Endothelial cell of umbilical vein (primary cell): ENCODE measurements at regions of chr17 and their contacts with region 1.

Region 1: GRCh38 chr17:19766422-19767270 is 18.5 kb upstream of the ALDH3A1 start:
- DNase-seq: peak; percentile 69
- H3K4me3 ChIP-seq: no peak overlapping the region
- H3K27ac ChIP-seq: no peak overlapping the region
- H3K4me1 ChIP-seq: peaks cover 5% of the 10 kb centered on the region
- H3K27me3 ChIP-seq: no peaks in the 10 kb centered on the region
- CTCF ChIP-seq: peak; percentile 96 to 99
- POLR2A ChIP-seq: no peak

Region 2: GRCh38 chr17:19362277-19363113 is 404.2 kb before region 1 on chr17 and contains the start of gene B9D1:
- CTCF ChIA-PET with region 1: interaction called, 169 read pairs
- POLR2A ChIA-PET with region 1: no interaction called
- dilution Hi-C with region 1: no loop called
- intact Hi-C with region 1: loop called (anchors 1 kb)
- DNase-seq: peak; percentile 93
- H3K4me3 ChIP-seq: peak within 1 kb of the TSS; percentile 53 to 66 (median 60)
- H3K27ac ChIP-seq: peak within 1 kb of the TSS; percentile 49
- H3K4me1 ChIP-seq: peaks cover 8% of the 10 kb centered on the region
- H3K27me3 ChIP-seq: no peaks in the 10 kb centered on the region
- CTCF ChIP-seq: peak; percentile 88 to 95
- POLR2A ChIP-seq: peak; percentile 10
- total RNA-seq, gene B9D1: 17.9 and 20.5 TPM in 2 replicates

Region 3: DNA sequence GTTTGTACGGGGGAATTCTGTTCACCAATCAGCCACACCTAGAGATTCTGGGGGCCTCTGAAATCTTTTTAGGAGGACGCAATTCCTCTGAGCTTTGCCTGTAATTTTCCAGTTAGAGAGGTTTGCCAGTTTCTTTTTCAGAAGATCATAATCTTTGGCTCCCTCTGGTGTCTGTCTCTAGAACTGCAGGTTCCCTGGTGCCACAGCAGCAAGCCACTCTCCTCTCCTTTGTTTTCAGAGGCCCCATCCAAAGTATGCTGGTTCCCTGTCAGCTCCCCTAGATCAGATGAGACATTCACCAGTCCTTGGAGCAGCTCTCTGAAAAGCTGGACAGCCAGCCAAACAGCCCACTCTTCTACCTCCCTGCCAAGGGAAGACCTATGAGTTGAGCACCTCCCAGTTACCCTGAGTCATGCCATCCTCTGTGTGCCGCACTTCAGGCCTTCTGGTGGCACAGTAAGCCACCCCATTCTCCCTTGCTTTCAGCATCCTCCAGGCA is 319.5 kb before region 1 on chr17:
- CTCF ChIA-PET with region 1: interaction called, 16 read pairs
- POLR2A ChIA-PET with region 1: no interaction called
- dilution Hi-C with region 1: no loop called
- intact Hi-C with region 1: loop called (anchors 5 kb)
- DNase-seq: peak; percentile 86
- H3K4me3 ChIP-seq: no peak overlapping the region
- H3K27ac ChIP-seq: peak overlapping the region; percentile 91
- H3K4me1 ChIP-seq: peaks cover 25% of the 10 kb centered on the region
- H3K27me3 ChIP-seq: no peaks in the 10 kb centered on the region
- CTCF ChIP-seq: peak; percentile 76 to 85
- POLR2A ChIP-seq: no peak

Region 4: GRCh38 chr17:19533718-19534561 is 232.7 kb before region 1 on chr17 and contains the start of gene SLC47A1:
- CTCF ChIA-PET with region 1: interaction called, 12 read pairs
- POLR2A ChIA-PET with region 1: no interaction called
- dilution Hi-C with region 1: no loop called
- intact Hi-C with region 1: no loop called
- DNase-seq: peak; percentile 52
- H3K4me3 ChIP-seq: peak within 1 kb of the TSS; percentile 58 to 88 (median 67)
- H3K27ac ChIP-seq: no peak within 1 kb of the TSS
- H3K4me1 ChIP-seq: peaks cover 8% of the 10 kb centered on the region
- H3K27me3 ChIP-seq: no peaks in the 10 kb centered on the region
- CTCF ChIP-seq: no peak
- POLR2A ChIP-seq: no peak
- total RNA-seq, gene SLC47A1: 0.90 and 3.3 TPM in 2 replicates

Region 5: GRCh38 chr17:19648475-19649406 is 117.9 kb before region 1 on chr17 and contains the start of gene ALDH3A2:
- CTCF ChIA-PET with region 1: interaction called, 51 read pairs
- POLR2A ChIA-PET with region 1: interaction called, 4 read pairs
- dilution Hi-C with region 1: no loop called
- intact Hi-C with region 1: no loop called
- DNase-seq: peak; percentile 94
- H3K4me3 ChIP-seq: peak within 1 kb of the TSS; percentile 16 to 97 (median 88)
- H3K27ac ChIP-seq: peak within 1 kb of the TSS; percentile 59
- H3K4me1 ChIP-seq: peaks cover 26% of the 10 kb centered on the region
- H3K27me3 ChIP-seq: no peaks in the 10 kb centered on the region
- CTCF ChIP-seq: peak in 1 of 2 donors; percentile 20
- POLR2A ChIP-seq: peak; percentile 88
- total RNA-seq, gene ALDH3A2: 28.1 and 36.5 TPM in 2 replicates

Region 6: DNA sequence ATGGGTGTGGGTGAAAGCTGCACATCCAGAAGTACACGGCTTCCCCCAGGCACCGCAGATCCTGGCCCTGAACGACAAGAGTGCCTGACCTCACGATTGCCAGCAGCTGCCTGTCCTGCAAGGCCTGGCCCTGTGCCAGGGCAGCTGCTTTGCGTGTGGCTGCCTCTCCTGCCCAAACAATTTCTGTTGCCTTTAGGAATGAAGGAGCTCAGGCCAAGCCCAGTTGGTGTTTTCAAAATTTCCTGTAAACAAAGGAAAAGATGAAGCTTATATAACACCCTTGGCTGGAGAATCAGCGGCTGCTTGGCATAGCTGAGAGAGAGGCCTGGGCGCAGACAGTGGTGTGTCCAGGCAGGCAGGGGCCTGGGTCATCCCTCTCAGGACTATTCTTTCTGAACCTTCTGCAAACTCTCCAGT is 38.6 kb before region 1 on chr17:
- CTCF ChIA-PET with region 1: interaction called, 12 read pairs
- POLR2A ChIA-PET with region 1: no interaction called
- dilution Hi-C with region 1: no loop called
- intact Hi-C with region 1: no loop called
- DNase-seq: peak; percentile 89
- H3K4me3 ChIP-seq: no peak overlapping the region
- H3K27ac ChIP-seq: no peak overlapping the region
- H3K4me1 ChIP-seq: peaks cover 15% of the 10 kb centered on the region
- H3K27me3 ChIP-seq: no peaks in the 10 kb centered on the region
- CTCF ChIP-seq: no peak
- POLR2A ChIP-seq: no peak

Region 7: DNA sequence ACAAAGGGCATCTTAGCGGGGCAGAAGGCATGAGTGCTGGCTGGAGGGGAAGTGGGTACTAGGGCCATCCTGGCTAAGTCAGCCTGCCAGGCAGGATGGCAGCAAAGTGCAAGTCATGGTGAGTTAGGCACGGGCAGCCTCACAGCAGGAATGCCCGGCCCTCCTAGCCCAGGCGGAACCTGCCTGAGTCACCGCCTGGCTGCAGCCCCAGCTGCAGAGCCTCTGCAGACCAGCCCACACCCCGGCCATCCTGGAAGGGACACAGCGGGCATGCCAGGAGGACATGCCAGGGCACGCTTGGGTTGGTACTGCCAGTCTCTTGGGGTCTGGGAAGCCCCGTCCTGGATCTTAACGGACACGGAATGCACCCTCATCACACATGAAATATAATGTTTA is 13.6 kb before region 1 on chr17:
- CTCF ChIA-PET with region 1: interaction called, 72 read pairs
- POLR2A ChIA-PET with region 1: interaction called, 6 read pairs
- dilution Hi-C with region 1: no loop called
- intact Hi-C with region 1: no loop called
- DNase-seq: peak; percentile 83
- H3K4me3 ChIP-seq: no peak overlapping the region
- H3K27ac ChIP-seq: peak overlapping the region; percentile 94
- H3K4me1 ChIP-seq: peaks cover 18% of the 10 kb centered on the region
- H3K27me3 ChIP-seq: no peaks in the 10 kb centered on the region
- CTCF ChIP-seq: no peak
- POLR2A ChIP-seq: no peak

Region 8: DNA sequence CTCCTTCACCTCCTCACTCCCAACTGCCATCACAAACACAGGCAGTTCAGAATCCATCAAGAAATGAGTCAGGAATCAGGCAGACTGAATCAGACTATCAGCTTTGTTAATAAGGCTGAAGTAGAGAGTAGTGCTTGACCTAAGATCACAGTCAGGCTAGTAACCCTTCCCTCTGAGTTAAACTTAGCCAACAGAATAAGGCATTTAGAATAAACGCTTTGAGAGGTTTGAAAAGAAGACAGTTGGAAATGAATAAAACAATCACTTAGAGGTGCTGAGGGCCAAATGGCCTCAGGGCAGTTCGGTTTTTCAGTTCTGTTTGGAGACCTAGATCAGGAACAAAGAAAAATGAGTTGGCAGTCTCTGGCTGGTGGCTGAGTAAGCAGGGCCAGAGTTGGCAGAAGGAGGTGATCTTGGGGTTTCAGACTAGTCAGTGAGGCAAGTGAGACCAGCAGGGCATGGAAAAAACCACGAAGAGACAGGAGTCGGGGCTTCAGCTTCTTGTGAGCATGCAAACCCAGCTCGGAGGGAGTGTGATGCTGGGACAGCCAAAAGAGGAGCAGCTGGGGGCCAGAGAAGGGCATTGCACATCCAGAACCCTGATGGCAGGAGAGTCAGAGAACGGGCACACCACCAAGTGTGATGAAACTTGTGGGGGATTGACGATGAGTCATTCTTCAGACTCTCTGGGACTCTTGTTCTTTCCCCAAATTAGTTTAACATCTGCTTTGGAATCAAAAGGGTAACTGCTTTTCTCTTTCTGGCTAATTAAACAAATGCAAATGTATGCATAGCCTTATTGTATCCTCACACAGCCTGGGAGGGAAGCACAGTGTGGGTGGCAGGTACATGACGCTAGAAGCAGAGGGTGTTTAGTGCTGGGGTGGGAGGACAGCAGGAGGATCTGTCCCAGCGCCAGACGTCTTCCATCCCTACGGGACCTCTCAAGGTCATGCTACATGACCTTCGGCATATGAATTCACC is 297.3 kb after region 1 on chr17:
- CTCF ChIA-PET with region 1: no interaction called
- POLR2A ChIA-PET with region 1: no interaction called
- dilution Hi-C with region 1: no loop called
- intact Hi-C with region 1: no loop called
- DNase-seq: no peak
- H3K4me3 ChIP-seq: no peak overlapping the region
- H3K27ac ChIP-seq: no peak overlapping the region
- H3K4me1 ChIP-seq: no peaks in the 10 kb centered on the region
- H3K27me3 ChIP-seq: no peaks in the 10 kb centered on the region
- CTCF ChIP-seq: no peak
- POLR2A ChIP-seq: no peak